ENCODE measurements at regions of chr4 and their contacts with region 1.

Region 1: DNA sequence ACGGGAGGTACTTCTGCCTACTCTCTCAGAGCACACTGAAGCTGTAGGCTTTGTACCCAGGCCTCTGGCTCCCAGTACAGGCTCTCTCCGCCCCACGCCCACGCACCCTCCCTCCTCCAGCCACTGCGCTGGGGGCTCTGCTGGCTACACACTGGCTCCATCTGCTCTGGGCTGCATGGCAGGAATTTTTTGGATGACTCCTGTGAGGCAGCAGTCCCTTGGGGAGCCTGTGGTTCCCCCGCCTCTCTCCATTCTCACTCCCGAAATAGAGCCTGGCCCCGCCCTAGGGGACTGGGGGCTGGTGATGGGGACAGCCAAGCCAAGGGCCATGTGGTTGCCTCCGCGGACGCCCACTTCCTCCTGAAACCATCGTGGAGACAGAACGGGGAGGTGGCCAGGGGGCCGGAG is 58.1 kb upstream of the ADRA2C start:
- DNase-seq: peak; percentile 89 to 95
- ATAC-seq: peak; percentile 84
- H3K4me3 ChIP-seq: no peak overlapping the region
- H3K27ac ChIP-seq: peak overlapping the region in 1 of 2 donors; percentile 18
- H3K4me1 ChIP-seq: no peaks in the 10 kb centered on the region
- H3K27me3 ChIP-seq: no peaks in the 10 kb centered on the region

Region 2: GRCh38 chr4:3657902-3658529 is 50.1 kb before region 1 on chr4:
- intact Hi-C with region 1: loop called in 1 of 2 experiments (anchors 2 kb)
- DNase-seq: peak; percentile 84 to 92
- ATAC-seq: peak; percentile 81
- H3K4me3 ChIP-seq: no peak overlapping the region
- H3K27ac ChIP-seq: peak overlapping the region; percentile 64 to 89
- H3K4me1 ChIP-seq: peaks cover 0 to 4% of the 10 kb centered on the region in 2 donors
- H3K27me3 ChIP-seq: no peaks in the 10 kb centered on the region

Region 3: GRCh38 chr4:3666263-3666662 is 41.8 kb before region 1 on chr4:
- intact Hi-C with region 1: loop called in 1 of 2 experiments (anchors 2 kb)
- DNase-seq: no peak
- ATAC-seq: no peak
- H3K4me3 ChIP-seq: no peak overlapping the region
- H3K27ac ChIP-seq: no peak overlapping the region
- H3K4me1 ChIP-seq: no peaks in the 10 kb centered on the region
- H3K27me3 ChIP-seq: no peaks in the 10 kb centered on the region

Region 4: DNA sequence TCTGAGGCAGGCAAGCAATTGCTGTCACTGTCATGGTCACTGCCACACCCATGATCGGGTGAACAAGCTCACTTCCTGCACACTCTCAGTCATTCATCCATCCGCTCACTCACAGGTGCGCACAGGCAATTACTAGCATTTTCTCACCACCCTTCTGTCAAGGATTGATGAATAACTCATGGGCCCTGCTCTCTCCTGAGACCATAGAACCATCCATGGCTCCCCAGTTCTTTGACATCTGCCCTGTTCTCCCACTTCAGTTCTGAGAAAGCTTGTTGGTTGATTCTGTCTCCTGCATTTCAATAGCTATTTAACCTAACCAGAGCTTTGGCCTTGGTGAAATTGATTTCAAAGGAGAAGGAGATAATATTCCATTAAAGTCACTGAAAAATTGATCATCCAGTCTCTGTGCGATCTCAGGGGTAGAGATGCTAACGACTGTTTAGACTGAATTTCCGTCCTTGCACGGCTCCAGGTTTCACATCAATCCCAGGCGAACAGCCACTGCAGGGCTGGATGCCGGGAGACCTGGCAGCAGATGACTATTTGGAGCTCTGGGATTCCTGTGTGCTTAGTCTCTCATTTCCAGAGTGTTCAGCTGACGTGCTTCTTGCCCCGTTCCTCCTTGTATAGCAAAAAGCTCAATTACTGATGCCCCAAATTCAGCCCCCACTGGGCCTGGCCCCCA is 21.2 kb after region 1 on chr4:
- intact Hi-C with region 1: loop called in 1 of 2 experiments (anchors 2 kb)
- DNase-seq: peak in 1 of 2 donors; percentile 67
- ATAC-seq: peak; percentile 51
- H3K4me3 ChIP-seq: no peak overlapping the region
- H3K27ac ChIP-seq: peak overlapping the region; percentile 9 to 22
- H3K4me1 ChIP-seq: no peaks in the 10 kb centered on the region
- H3K27me3 ChIP-seq: no peaks in the 10 kb centered on the region

Region 5: GRCh38 chr4:3765271-3766040 is 57.3 kb after region 1 on chr4:
- intact Hi-C with region 1: loop called (anchors 5 kb)
- DNase-seq: peak; percentile 80 to 90
- ATAC-seq: peak; percentile 65
- H3K4me3 ChIP-seq: peak overlapping the region; percentile 65 to 70
- H3K27ac ChIP-seq: peak overlapping the region; percentile 38 to 94
- H3K4me1 ChIP-seq: no peaks in the 10 kb centered on the region
- H3K27me3 ChIP-seq: no peaks in the 10 kb centered on the region